ENCODE measurements at regions of chr1 and their contacts with region 1.

Region 1: GRCh38 chr1:243325305-243325890 is 69.6 kb downstream of the SDCCAG8 start:
- DNase-seq: peak; percentile 79
- H3K4me3 ChIP-seq: no peak overlapping the region
- H3K27ac ChIP-seq: no peak overlapping the region
- H3K4me1 ChIP-seq: no peaks in the 10 kb centered on the region
- H3K27me3 ChIP-seq: no peaks in the 10 kb centered on the region
- CTCF ChIP-seq: peak; percentile 37 to 52
- POLR2A ChIP-seq: no peak

Region 2: DNA sequence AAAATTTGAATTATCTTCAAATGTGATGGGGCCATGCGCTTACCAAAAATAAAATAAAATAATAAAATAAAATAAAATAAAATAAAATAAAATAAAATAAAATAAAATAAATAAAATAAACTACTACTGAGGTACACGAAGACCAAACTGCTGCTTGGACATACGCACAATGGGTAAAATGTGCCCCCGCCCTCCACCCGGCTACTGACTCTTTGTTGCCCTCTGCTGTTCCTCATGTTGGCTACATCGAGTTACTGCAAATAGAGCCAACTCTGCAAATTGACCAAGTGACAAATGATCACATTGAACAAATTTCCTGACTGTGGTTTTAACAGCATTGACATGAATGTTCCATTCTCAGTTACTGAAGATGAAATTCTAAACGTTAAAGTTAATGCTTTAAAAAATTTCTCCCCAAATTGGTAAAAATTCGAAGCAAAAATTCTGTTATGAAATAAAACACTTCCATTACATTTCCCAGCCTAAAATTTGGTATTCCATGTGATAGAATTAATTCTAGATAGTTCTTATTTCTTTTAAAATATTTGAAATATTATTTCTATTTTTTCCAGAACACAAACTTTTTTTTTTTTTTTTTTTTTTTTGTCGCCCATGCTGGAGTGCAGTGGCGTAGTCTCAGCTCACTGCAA is 1307.7 kb before region 1 on chr1:
- CTCF ChIA-PET with region 1: no interaction called
- POLR2A ChIA-PET with region 1: no interaction called
- dilution Hi-C with region 1: no loop called
- intact Hi-C with region 1: loop called (anchors 5 kb)
- DNase-seq: peak; percentile 56
- H3K4me3 ChIP-seq: no peak overlapping the region
- H3K27ac ChIP-seq: no peak overlapping the region
- H3K4me1 ChIP-seq: no peaks in the 10 kb centered on the region
- H3K27me3 ChIP-seq: no peaks in the 10 kb centered on the region
- CTCF ChIP-seq: peak; percentile 58 to 66
- POLR2A ChIP-seq: no peak

Region 3: GRCh38 chr1:242454262-242455045 is 870.9 kb before region 1 on chr1:
- CTCF ChIA-PET with region 1: no interaction called
- POLR2A ChIA-PET with region 1: no interaction called
- dilution Hi-C with region 1: no loop called
- intact Hi-C with region 1: loop called (anchors 5 kb)
- DNase-seq: peak; percentile 37
- H3K4me3 ChIP-seq: no peak overlapping the region
- H3K27ac ChIP-seq: no peak overlapping the region
- H3K4me1 ChIP-seq: no peaks in the 10 kb centered on the region
- H3K27me3 ChIP-seq: no peaks in the 10 kb centered on the region
- CTCF ChIP-seq: peak; percentile 48 to 49
- POLR2A ChIP-seq: no peak

Region 4: GRCh38 chr1:242467556-242468145 is 857.7 kb before region 1 on chr1:
- CTCF ChIA-PET with region 1: no interaction called
- POLR2A ChIA-PET with region 1: no interaction called
- dilution Hi-C with region 1: no loop called
- intact Hi-C with region 1: loop called (anchors 5 kb)
- DNase-seq: peak; percentile 26
- H3K4me3 ChIP-seq: no peak overlapping the region
- H3K27ac ChIP-seq: no peak overlapping the region
- H3K4me1 ChIP-seq: no peaks in the 10 kb centered on the region
- H3K27me3 ChIP-seq: no peaks in the 10 kb centered on the region
- CTCF ChIP-seq: peak; percentile 40 to 54
- POLR2A ChIP-seq: no peak

Region 5: DNA sequence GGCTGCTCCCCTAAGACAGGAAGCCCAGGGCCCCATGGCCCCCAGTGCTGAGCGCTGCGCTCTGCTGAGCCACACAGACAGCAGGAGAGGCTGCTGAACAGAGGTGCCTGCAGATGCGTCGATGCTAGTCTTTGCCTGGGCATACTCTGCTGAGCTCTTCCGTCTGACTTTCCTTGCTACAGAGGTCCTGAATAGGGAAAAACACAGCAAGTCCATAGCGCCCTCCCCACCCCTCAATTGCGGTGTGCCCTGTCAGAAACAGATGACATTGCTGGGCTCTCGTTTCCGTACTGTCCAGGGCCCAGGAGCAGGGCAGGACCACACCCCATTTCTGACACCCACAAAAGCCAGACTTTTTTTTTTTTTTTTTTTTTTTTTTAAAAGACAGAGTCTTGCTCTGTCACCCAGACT is 182.9 kb after region 1 on chr1:
- CTCF ChIA-PET with region 1: no interaction called
- POLR2A ChIA-PET with region 1: no interaction called
- dilution Hi-C with region 1: no loop called
- intact Hi-C with region 1: no loop called
- DNase-seq: no peak
- H3K4me3 ChIP-seq: no peak overlapping the region
- H3K27ac ChIP-seq: no peak overlapping the region
- H3K4me1 ChIP-seq: no peaks in the 10 kb centered on the region
- H3K27me3 ChIP-seq: no peaks in the 10 kb centered on the region
- CTCF ChIP-seq: no peak
- POLR2A ChIP-seq: no peak

Measured in endothelial cell of umbilical vein (primary cell).